ENCODE measurements at regions of chr10 and their contacts with region 1.

Region 1: DNA sequence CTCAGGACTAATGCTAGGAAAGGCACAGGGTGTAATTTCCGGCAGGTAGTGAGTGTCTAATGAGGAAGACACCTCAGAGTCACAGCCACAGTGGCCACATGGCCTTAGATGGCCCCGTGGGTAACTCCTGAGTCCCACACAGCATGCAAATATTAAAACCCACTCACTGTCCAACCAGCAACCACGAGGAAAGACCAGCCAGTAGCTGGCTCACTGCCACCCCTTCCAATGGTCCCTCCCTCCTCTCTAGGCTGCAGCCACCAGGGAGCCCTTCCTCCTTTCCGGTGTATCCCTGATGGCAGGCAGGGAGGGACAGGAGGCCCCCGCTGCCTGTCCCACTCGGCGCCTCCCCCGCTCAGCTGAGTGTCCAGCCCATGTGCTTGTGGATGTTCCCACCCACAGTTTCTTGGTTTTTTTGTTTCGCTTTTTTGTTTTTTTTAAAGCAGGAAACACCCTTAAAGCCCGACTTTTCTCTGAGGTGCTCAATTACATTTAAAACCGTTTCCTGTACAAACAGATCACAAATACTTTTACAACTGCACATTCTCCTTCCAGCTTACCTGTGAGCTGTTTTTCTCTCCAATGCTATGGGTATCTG is 9.2 kb downstream of the BNIP3 start:
- DNase-seq: no peak
- H3K4me3 ChIP-seq: no peak overlapping the region
- H3K27ac ChIP-seq: no peak overlapping the region
- H3K4me1 ChIP-seq: 0 out of 7 replicates have a peak, but pooled peaks cover 0 to under 1% (median 0%) of the 10 kb centered on the region in 4 experiments
- H3K27me3 ChIP-seq: no peaks in the 10 kb centered on the region; a peak in 1 of 7 replicates
- CTCF ChIP-seq: no peak
- EP300 ChIP-seq: no peak
- POLR2A ChIP-seq: no peak
- RAD21 ChIP-seq: no peak

Region 2: GRCh38 chr10:131825150-131825848 is 147.3 kb before region 1 on chr10:
- CTCF ChIA-PET with region 1: no interaction called
- POLR2A ChIA-PET with region 1: no interaction called
- DNase-seq: no peak
- H3K4me3 ChIP-seq: no peak overlapping the region
- H3K27ac ChIP-seq: no peak overlapping the region
- H3K4me1 ChIP-seq: peaks cover 3 to 11% (median 8%) of the 10 kb centered on the region in 4 experiments
- H3K27me3 ChIP-seq: no peaks in the 10 kb centered on the region; a peak in 1 of 7 replicates
- CTCF ChIP-seq: no peak
- EP300 ChIP-seq: no peak
- POLR2A ChIP-seq: no peak
- RAD21 ChIP-seq: no peak

Region 3: DNA sequence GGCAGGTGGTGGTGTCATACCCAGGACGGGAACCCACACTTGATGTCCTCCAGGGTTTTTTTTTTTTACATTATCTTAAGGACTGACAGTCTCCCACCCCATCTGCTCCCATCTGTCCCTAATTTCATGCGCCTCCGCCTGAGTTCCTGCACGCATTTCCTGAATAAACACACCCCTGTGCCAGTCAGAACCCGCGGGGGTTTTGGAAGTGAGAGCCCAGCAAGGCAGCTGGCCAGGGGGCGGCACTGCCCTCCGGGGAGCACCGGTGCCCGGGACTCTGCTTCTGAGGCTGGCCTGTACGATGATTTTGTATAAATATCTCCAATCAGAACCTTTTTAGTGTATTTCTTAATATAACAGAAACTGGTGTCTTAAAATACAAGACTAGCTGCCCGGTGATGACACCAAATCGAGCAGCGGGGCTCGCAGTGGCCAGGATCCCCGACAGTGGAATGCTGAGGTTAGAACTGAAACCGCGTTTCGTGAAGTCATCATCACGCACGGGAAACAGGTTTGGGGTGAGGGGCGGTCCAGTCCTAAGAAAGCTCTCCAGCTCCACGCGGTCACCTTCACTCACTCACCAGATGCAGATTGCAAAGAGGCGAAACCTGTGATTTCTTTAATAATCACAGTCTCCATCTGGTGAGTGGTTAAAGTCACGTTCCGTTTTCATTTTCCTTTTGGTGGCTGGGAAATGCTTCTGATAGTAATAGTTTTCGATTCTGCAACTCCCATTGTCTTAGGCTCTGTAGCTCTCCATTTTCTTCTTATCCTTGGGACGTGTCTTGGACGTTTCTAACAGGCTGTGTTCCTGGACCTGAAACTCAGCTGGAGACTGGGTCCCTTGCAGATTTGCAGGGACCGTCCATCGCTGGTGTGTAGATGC is 10.6 kb before region 1 on chr10:
- CTCF ChIA-PET with region 1: interaction called, 7 read pairs
- POLR2A ChIA-PET with region 1: interaction called, 20 read pairs
- DNase-seq: no peak
- H3K4me3 ChIP-seq: no peak overlapping the region
- H3K27ac ChIP-seq: no peak overlapping the region
- H3K4me1 ChIP-seq: no peaks in the 10 kb centered on the region; a peak in 1 of 7 replicates
- H3K27me3 ChIP-seq: no peaks in the 10 kb centered on the region
- CTCF ChIP-seq: no peak
- EP300 ChIP-seq: no peak
- POLR2A ChIP-seq: no peak
- RAD21 ChIP-seq: no peak

Measured in H1 (cell line).